Mucosa of descending colon (tissue), 3 donors: ENCODE measurements at regions of chr14 and their contacts with region 1.

Region 1: GRCh38 chr14:80996049-80996901 is 40.9 kb downstream of the TSHR start:
- DNase-seq: peak in 1 of 3 donors; percentile 55
- ATAC-seq: peak; percentile 82
- H3K4me3 ChIP-seq: no peak overlapping the region
- H3K4me1 ChIP-seq: no peaks in the 10 kb centered on the region
- CTCF ChIP-seq: peak; percentile 15

Region 2: DNA sequence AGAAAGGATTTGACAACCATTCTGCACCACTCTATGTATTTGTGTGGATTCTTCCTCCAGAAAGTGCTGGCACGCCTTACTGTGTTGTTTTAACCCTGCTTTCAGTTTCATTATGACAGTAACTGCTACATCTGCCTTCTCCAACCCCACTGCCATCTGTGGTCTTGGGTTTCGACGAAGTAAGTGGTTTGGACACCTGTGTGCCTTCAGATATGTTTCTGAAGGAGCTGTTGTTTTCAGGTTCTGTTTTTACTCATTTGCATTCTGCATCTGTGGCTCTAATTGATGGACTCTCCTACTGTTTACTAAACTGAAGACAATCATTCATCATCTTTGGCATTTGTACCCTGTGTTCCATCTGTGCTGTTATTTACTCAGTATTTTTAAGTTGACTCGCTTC is 36.8 kb before region 1 on chr14:
- intact Hi-C with region 1: no loop called
- DNase-seq: peak in 1 of 3 donors; percentile 57
- ATAC-seq: peak; percentile 80
- H3K4me3 ChIP-seq: no peak overlapping the region
- H3K4me1 ChIP-seq: peaks cover 21% of the 10 kb centered on the region
- CTCF ChIP-seq: no peak

Region 3: DNA sequence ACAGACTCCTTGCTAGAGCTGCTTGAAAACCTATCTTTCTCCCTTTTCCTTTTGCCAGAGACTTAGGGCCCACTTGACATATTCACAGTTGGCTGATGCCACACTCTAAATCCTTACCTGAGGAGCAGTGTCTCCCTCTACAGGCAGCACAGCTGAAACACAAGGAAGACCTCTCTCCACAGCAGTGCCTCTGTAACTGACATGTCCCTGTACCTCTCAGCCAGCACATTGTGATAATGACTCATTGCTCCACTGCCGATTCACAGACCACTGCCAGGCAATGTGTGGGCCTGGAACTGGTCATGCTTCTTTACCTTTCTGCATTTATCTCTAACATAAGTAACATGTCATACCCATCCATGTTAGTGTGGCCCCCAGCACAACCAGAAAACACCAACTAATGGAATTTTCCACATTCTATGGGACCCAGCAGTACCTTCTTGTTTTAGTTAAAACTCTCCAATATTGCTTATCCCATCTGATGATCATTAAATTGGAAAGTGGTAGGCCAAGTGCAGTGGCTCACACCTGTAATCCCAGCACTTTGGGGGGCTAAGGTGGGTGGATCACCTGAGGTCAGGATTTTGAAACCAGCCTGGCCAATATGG is 168.0 kb after region 1 on chr14:
- intact Hi-C with region 1: loop called (anchors 10 kb)
- DNase-seq: peak in 2 of 3 donors; percentile 24 to 46
- ATAC-seq: peak; percentile 94
- H3K4me3 ChIP-seq: no peak overlapping the region
- H3K4me1 ChIP-seq: no peaks in the 10 kb centered on the region
- CTCF ChIP-seq: peak; percentile 16